Aorta (tissue), 5 donors: ENCODE measurements at regions of chr4 and their contacts with region 1.

Region 1: GRCh38 chr4:4254666-4255065 is 6.6 kb upstream of the TMEM128 start:
- DNase-seq: no peak
- ATAC-seq: no peak
- H3K4me3 ChIP-seq: no peak overlapping the region
- H3K27ac ChIP-seq: no peak overlapping the region
- H3K4me1 ChIP-seq: no peaks in the 10 kb centered on the region
- H3K27me3 ChIP-seq: no peaks in the 10 kb centered on the region

Region 2: DNA sequence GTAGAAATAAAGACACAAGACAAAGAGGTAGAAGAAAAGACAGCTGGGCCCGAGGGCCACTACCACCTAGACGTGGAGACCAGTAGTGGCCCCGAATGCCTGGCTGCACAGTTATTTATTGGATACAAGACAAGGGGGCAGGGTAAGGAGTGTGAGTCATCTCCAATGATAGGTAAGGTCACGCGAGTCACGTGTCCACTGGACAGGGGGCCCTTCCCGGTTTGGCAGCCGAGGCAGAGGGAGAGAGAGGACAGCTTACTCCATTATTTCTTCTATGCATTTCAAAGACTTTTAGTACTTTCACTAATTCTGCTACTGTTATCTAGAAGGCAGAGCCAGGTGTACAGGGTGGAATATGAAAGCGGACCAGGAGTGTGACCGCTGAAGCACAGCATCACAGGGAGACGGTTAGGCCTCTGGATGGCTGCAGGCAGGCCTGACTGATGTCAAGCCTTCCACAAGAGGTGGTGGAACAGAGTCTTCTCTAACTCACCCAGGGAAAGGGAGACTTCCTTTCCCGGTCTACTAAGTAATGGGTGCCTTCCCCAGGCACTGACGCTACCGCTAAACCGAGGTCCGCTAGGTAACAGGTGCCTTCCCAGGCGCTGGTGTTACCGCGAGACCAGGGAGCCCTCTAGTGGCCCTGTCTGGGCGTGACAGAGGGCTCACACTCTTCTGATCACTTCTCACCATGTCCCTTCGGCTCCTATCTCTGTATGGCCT is 80.3 kb after region 1 on chr4:
- intact Hi-C with region 1: loop called in 1 of 2 experiments (anchors 5 kb)
- DNase-seq: peak; percentile 61 to 83
- ATAC-seq: no peak
- H3K4me3 ChIP-seq: no peak overlapping the region
- H3K27ac ChIP-seq: no peak overlapping the region
- H3K4me1 ChIP-seq: no peaks in the 10 kb centered on the region
- H3K27me3 ChIP-seq: no peaks in the 10 kb centered on the region